Psoas muscle (tissue), 8 donors: ENCODE measurements at regions of chr1 and their contacts with region 1.

Region 1: DNA sequence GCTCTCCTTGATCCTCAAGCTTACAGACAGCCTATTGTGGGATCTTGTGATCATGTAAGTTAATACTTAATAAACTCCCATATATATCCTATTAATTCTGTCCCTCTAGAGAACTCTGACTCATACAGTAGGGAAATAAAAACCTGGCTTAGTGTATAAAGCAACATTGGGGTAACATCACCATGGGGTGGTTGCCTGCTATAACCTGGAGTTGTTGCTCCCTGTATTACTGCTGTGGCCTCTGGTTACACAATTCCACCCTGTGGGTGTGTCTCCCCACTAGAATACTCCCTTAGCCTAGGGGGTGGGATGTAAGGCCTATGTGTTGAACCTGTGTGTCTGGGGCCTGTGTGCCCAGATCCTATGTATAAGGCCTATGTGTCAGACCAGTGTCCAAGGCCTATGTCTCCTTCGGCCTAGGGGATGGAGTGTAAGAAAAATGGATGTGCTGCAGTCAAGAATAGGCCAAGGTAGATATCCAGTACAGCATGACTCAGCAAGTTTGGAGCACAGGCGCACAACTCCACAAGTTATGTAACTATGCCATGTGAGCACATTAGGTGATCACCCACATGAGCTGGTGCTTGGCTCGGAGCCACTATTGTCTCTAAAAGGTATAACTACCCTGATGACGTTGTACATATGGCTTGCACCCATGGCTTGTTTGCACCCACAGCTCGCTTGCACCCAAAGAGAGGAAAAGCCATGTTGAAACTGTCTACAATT is 96.8 kb upstream of the C1orf21 start:
- DNase-seq: no peak
- ATAC-seq: no peak
- H3K4me3 ChIP-seq: no peak overlapping the region
- H3K27ac ChIP-seq: no peak overlapping the region
- H3K4me1 ChIP-seq: peaks cover 13% of the 10 kb centered on the region
- H3K27me3 ChIP-seq: no peaks in the 10 kb centered on the region
- CTCF ChIP-seq: no peak

Region 2: GRCh38 chr1:184366997-184367396 is 77.0 kb after region 1 on chr1:
- intact Hi-C with region 1: loop called in 1 of 2 experiments (anchors 5 kb)
- DNase-seq: no peak
- ATAC-seq: peak in 3 of 4 donors; percentile 26 to 33 (median 27)
- H3K4me3 ChIP-seq: peak overlapping the region; percentile 1
- H3K27ac ChIP-seq: peak overlapping the region; percentile 21
- H3K4me1 ChIP-seq: peaks cover 36% of the 10 kb centered on the region
- H3K27me3 ChIP-seq: no peaks in the 10 kb centered on the region
- CTCF ChIP-seq: no peak

Region 3: GRCh38 chr1:184595591-184595990 is 305.6 kb after region 1 on chr1:
- intact Hi-C with region 1: no loop called
- DNase-seq: no peak
- ATAC-seq: peak; percentile 64 to 93 (median 82)
- H3K4me3 ChIP-seq: no peak overlapping the region
- H3K27ac ChIP-seq: no peak overlapping the region
- H3K4me1 ChIP-seq: no peaks in the 10 kb centered on the region
- H3K27me3 ChIP-seq: no peaks in the 10 kb centered on the region
- CTCF ChIP-seq: no peak

Region 4: DNA sequence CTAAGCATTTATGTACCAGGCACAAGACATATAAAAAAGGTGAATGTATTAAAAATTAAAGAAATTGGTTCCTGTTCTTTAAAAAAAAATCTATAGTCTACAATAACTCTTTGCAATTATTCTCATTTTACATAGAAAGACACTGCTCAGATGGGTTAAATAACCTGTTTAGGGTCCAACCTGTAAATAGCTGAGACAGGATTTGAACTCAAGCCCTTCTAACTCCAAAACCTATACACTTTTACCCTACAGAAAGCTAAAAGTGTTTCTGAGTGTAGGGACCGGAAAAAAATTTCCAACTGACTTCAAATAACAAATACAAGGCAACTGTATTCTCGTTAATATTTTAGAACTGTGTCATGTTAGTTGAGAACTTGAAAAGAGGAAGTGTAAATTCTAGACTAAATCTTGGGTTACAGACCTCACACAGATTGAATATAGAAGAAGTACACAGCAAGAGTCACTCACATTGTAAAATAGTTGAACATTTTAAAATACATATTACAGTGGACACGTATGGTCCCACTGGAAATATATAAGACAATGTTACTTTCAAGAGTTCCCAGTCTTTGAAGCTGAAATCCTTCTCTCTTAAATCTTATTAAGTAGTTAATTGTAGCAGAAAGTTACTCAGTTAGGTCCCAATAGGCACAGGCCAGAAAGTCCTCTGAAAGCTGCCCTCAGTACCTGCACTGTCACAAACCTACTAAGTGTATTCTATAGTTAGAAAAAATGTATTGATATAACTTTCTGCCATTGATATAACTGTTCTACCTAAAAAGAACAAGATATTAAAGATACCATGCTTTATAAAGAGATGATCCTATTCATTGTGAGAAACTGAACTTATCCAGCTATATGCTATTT is 457.3 kb after region 1 on chr1:
- intact Hi-C with region 1: no loop called
- DNase-seq: no peak
- ATAC-seq: no peak
- H3K4me3 ChIP-seq: no peak overlapping the region
- H3K27ac ChIP-seq: no peak overlapping the region
- H3K4me1 ChIP-seq: peaks cover 40% of the 10 kb centered on the region
- H3K27me3 ChIP-seq: no peaks in the 10 kb centered on the region
- CTCF ChIP-seq: no peak